Panc1 (cell line): ENCODE measurements at regions of chr9 and their contacts with region 1.

Region 1: DNA sequence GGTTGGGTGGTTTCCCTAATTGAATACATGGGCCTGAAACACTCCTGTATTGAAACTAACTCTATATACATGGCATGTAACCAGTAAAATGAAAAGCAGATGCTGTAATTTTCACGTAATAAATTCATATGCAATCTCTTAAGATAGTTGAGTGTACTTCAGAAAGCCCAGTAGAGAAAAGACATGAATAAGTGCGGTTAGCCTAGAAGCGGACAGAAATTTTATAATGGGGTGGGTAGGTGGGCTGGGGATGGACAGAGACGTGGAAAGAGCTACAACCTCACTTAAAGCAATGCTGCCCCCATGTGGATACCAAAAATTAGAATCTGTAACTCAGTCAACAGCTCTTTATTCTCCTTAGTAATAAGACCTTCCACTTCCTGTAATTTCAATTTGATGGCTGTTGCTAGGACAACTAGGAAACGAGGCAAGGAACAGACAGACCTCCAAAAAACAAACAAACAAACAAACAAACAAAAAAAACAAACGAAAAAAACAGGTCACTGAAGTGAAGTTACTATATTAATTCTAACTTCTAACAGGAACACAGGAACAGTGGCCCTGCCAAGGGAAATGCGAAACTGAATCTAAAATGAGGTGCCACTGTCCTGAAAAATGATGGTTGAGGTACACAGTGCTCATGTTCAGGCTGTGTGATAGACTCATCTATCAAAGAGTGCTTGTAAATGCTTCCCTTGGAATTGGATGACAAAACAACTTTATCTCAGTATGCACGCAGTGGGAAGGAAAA is 103.4 kb upstream of the GNA14 start:
- DNase-seq: no peak
- ATAC-seq: peak; percentile 66; the same call in 1 of the 2 replicates
- H3K4me3 ChIP-seq: no peak overlapping the region
- H3K27ac ChIP-seq: no peak overlapping the region
- H3K4me1 ChIP-seq: no peaks in the 10 kb centered on the region
- H3K27me3 ChIP-seq: no peaks in the 10 kb centered on the region
- CTCF ChIP-seq: peak; percentile 61

Region 2: GRCh38 chr9:77456829-77457437 is 294.6 kb before region 1 on chr9:
- CTCF ChIA-PET with region 1: interaction called, 3 read pairs
- POLR2A ChIA-PET with region 1: no interaction called
- in situ Hi-C with region 1: no loop called
- intact Hi-C with region 1: loop called (anchors 5 kb)
- DNase-seq: peak; percentile 77
- ATAC-seq: peak; percentile 78
- H3K4me3 ChIP-seq: no peak overlapping the region
- H3K27ac ChIP-seq: no peak overlapping the region
- H3K4me1 ChIP-seq: no peaks in the 10 kb centered on the region
- H3K27me3 ChIP-seq: no peaks in the 10 kb centered on the region
- CTCF ChIP-seq: peak; percentile 85